Prostate gland (tissue), 2 donors: ENCODE measurements at regions of chr16 and their contacts with region 1.

Region 1: DNA sequence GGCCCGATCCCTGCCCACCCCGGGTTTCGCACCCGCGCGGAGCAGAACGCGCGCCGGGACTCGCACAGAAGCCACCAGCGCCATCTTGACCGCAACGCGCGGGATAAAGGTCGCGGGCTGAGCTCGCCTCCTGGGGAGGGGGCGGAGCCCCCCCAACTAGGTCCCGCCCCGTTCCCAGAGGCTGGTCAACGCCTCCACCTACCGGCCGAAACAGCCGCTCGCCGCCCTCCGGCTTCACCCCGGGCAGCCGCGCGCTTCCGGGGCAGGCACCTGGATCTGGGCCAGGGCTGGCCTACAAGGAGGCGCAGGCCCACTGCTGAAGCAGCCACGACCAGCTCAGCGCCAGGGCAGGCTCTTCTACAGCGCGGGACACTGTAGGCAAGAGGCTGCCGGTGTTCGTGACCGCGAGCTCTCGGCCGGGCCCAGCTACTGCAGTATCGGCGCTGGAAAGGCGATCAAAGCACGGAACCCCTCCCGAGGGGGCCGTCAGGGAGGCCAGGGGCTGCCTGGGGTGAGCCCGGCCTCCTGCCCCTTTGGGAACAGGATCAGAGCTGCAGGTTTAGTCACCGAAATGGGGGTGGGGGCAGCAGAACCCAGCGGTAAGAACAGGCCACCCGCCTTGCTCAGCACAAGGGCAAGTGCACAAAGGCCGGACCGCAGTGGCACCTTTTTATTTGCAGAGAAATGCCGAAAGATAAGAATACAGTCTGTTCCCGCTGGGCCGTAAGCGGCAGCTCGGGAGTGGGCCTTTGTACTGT is at the start of gene ECI1:
- DNase-seq: peak; percentile 92
- H3K4me3 ChIP-seq: peak within 1 kb of the TSS; percentile 73 to 84
- H3K27ac ChIP-seq: peak within 1 kb of the TSS; percentile 88 to 94
- H3K4me1 ChIP-seq: peaks cover 10% of the 10 kb centered on the region
- H3K27me3 ChIP-seq: no peaks in the 10 kb centered on the region
- CTCF ChIP-seq: peak; percentile 53 to 96 (median 84)
- POLR2A ChIP-seq: peak; percentile 85
- total RNA-seq, gene ECI1: 48.5 to 87.0 TPM

Region 2: GRCh38 chr16:2155091-2156021 is 96.3 kb before region 1 on chr16 and contains the start of gene TRAF7:
- intact Hi-C with region 1: loop called (anchors 5 kb)
- DNase-seq: peak; percentile 100
- H3K4me3 ChIP-seq: peak within 1 kb of the TSS; percentile 72 to 87
- H3K27ac ChIP-seq: peak within 1 kb of the TSS; percentile 76 to 79
- H3K4me1 ChIP-seq: peaks cover 33% of the 10 kb centered on the region
- H3K27me3 ChIP-seq: no peaks in the 10 kb centered on the region
- CTCF ChIP-seq: peak in 2 of 4 experiments; percentile 19 to 39
- POLR2A ChIP-seq: peak; percentile 95
- total RNA-seq, gene TRAF7: 40.0 to 51.5 TPM

Region 3: DNA sequence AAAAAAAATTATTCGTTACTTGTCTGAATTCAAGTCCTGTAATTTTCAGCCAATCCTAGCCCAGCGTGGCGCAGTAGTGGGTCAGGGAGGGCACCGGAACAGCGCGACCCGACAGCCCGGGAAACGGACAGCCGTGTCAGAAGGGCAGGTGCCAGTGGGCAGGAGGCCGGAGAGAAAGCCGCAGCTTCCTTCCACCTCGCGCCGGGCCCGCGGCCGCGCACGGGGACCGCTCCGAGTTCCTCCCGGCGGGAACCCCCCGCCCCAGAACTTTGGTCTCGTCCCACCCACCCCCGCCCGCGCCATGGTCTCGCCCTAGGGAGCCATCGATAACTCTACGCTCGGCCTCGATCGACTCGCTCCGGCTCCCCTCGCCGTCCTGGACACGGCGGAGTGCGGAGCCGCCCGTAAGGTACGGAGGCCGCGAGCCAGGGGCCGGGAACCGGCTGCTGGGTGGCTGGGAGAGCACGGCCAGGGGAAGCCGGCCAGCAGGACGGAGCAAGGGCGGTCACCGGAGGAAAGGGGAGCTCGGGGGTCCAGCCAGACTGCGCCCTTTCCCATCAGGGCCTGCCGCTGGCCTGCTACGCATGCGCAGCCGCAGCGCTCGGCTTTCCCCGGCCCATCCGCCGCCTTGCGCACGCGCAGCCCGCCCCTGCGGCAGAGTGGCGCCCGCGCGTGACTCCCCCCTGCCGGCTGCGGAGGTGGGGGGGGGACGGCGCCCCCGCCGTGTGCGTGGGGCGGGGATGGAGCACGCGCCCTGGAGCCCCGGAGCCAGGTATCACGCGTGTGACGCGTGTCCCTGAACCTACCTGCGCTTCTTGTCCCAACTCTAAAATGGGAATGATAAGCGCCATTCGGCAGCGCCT is 46.3 kb before region 1 on chr16 and contains the start of gene MLST8:
- intact Hi-C with region 1: loop called (anchors 10 kb)
- DNase-seq: peak; percentile 74
- H3K4me3 ChIP-seq: peak within 1 kb of the TSS; percentile 78 to 83
- H3K27ac ChIP-seq: peak within 1 kb of the TSS; percentile 97
- H3K4me1 ChIP-seq: peaks cover 6% of the 10 kb centered on the region
- H3K27me3 ChIP-seq: no peaks in the 10 kb centered on the region
- CTCF ChIP-seq: peak in 2 of 4 experiments; percentile 34 to 48
- POLR2A ChIP-seq: peak; percentile 66
- total RNA-seq, gene MLST8: 55.9 to 110 TPM

Region 4: GRCh38 chr16:2459647-2460390 is 208.2 kb after region 1 on chr16 and contains the start of gene TEDC2:
- intact Hi-C with region 1: no loop called
- DNase-seq: peak; percentile 95
- H3K4me3 ChIP-seq: peak within 1 kb of the TSS; percentile 45
- H3K27ac ChIP-seq: peak within 1 kb of the TSS; percentile 18 to 26
- H3K4me1 ChIP-seq: no peaks in the 10 kb centered on the region
- H3K27me3 ChIP-seq: no peaks in the 10 kb centered on the region
- CTCF ChIP-seq: no peak
- POLR2A ChIP-seq: peak; percentile 14
- total RNA-seq, gene TEDC2: 3.0 to 12.1 TPM